Activated CD4-positive, alpha-beta memory T cell treated with anti-CD3 and anti-CD28 coated beads for 36 hours (primary cell): ENCODE measurements at regions of chr11 and their contacts with region 1.

Region 1: DNA sequence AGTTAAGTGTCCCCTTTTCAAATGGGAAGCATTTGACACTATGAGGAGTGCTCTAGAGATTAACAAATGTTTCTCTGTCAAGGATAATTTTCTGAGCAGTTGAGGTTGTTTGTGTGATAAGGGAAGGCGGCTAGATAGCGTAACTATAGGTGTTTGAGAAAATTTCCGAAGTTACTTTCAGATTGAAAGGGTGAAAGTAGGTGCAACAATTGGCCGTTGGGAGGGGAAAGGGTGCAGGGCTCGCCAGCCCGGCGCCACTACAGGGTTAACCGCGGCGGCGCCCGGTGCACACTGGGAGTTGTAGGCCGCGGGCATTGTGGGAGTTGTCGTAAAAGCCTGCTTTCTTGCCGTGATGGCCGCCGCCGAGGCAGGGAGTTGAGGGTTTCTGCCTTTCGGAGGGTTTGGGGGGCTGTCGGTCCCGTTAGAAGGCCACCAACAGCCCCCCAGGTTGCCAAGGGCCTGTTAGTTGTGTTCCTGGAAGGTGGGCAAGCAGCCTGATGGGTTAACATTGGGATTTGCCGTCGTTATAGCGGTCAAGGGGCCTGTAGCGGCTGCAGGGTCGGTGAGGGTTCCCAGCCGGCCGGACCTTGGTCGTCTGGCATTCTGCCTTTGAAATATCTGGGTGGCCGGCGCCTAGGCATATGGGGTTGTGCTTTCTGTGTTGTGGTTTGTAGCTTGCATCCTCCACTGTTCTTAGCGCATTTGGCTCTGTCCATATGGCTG is 36.5 kb upstream of the HSD17B12 start:
- DNase-seq: peak; percentile 93
- H3K4me3 Mint-ChIP-seq: peak overlapping the region; percentile 97
- H3K27ac Mint-ChIP-seq: peak overlapping the region; percentile 75
- H3K4me1 Mint-ChIP-seq: peaks cover 24% of the 10 kb centered on the region
- H3K27me3 Mint-ChIP-seq: peaks cover 11% of the 10 kb centered on the region

Region 2: DNA sequence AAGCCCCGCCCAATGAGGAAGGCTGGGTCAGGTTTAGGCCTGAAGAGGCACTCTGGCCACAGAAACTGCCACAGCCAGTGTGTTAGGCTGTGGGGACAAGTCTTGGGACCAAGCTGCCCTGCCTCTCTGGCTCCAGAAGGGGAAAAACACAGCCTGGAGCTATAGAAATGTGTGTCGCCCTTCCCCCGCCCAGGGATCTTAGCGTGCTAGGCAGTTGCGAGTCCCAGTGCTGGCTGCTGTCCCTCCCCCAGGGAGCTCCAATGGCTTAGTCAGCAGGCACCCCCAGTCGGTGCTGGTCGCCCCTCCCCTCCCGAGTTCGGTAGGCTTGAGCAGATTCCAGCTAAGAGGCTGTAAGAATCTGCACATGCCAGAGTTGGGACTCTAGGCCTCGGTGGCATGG is 431.8 kb before region 1 on chr11:
- CTCF ChIA-PET with region 1: no interaction called
- POLR2A ChIA-PET with region 1: no interaction called
- intact Hi-C with region 1: no loop called
- DNase-seq: no peak
- H3K4me3 Mint-ChIP-seq: no peak overlapping the region
- H3K27ac Mint-ChIP-seq: no peak overlapping the region
- H3K4me1 Mint-ChIP-seq: no peaks in the 10 kb centered on the region
- H3K27me3 Mint-ChIP-seq: no peaks in the 10 kb centered on the region

Region 3: GRCh38 chr11:43547889-43548381 is 96.1 kb before region 1 on chr11:
- CTCF ChIA-PET with region 1: no interaction called
- POLR2A ChIA-PET with region 1: no interaction called
- intact Hi-C with region 1: no loop called
- DNase-seq: no peak
- H3K4me3 Mint-ChIP-seq: no peak overlapping the region
- H3K27ac Mint-ChIP-seq: no peak overlapping the region
- H3K4me1 Mint-ChIP-seq: peaks cover 3% of the 10 kb centered on the region
- H3K27me3 Mint-ChIP-seq: peaks cover 45% of the 10 kb centered on the region

Region 4: DNA sequence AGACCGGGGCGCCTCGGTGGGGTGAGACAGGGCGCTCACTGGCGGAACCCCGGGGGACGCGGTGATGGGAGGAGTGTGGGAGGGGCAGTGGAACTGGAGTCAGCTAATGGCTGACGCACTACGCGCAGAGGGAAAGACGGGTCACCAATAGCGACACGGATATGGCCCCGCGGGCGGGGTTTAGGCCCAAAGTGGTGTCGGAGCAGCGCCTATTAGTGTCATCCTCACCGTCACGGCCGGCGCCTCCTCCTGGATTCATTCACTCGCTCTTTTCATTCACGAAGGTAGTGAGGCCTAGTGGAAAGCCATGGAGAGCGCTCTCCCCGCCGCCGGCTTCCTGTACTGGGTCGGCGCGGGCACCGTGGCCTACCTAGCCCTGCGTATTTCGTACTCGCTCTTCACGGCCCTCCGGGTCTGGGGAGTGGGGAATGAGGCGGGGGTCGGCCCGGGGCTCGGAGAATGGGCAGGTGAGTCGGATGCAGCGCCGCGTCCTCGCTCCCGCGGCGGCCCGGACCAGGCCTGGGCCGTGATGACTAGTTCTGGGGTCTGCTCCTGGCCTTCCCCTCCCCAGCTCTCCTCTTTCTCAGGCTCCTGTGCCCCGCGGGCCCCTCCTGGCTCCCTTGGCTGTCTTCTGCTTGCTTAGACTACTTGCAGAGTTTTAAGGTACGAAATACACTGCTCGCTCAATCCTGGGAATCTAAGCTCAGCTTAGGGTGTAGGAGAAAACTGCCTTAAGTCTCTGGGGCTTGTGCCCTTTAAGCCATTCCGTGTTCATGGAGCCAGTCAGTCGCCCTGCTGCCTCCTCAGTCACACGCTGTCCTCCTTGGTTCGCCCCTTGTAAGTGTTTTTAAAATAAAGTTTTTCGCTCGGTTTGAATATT is 36.7 kb after region 1 on chr11 and contains the start of gene HSD17B12:
- CTCF ChIA-PET with region 1: interaction called, 3 read pairs
- POLR2A ChIA-PET with region 1: interaction called, 3 read pairs
- intact Hi-C with region 1: loop called (anchors 1 kb)
- DNase-seq: peak; percentile 100
- H3K4me3 Mint-ChIP-seq: peak within 1 kb of the TSS; percentile 92
- H3K27ac Mint-ChIP-seq: peak within 1 kb of the TSS; percentile 94
- H3K4me1 Mint-ChIP-seq: peaks cover 33% of the 10 kb centered on the region
- H3K27me3 Mint-ChIP-seq: no peaks in the 10 kb centered on the region
- total RNA-seq, gene HSD17B12: 32.8 to 35.3 TPM